GM10248 (cell line): ENCODE measurements at regions of chr7 and their contacts with region 1.

Region 1: DNA sequence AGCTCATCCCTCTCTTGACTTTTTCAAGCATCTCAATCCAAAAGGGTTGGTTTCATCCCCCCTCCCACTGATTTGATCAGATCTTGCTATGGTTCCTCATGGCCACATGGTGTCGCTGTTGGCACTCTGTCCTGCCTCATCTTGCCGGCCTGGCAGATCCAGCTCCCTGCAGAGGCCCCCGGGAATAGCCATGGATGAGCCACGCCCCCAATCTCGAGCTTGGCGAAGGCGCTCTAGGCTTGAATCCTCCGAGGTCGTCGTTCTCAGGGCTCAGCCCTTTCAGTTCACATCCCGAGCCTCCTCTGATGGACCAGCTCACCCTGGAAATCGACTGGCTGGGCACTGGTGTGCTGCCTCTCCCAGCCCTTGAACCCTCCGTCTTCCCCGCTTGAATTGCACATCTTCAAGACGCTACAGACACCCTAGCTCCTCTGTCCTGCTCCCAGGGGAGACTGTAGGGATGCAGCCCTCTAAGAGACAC is 628.7 kb downstream of the TYW1 start:
- DNase-seq: peak; percentile 43
- CTCF ChIP-seq: peak; percentile 72

Region 2: DNA sequence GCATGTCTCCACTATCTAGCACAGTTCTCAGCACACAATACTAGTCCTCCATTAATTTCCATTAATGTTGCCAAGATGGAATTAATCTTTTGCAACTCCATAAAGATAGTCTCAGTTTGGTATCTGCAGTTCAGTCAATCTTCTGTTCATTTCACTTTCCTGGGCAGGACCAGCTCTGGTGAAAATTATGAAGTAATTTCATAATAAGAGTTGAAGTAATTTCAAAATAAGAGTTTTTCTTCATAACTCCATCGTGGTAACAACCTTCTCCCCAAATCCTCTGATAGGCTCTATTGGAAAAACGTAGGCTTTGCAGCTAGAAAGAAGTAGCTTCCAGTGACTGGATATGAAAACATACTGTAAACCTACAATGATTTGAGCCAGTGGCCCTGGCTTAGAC is 10.5 kb before region 1 on chr7:
- CTCF ChIA-PET with region 1: interaction called, 22 read pairs
- POLR2A ChIA-PET with region 1: no interaction called
- DNase-seq: no peak
- CTCF ChIP-seq: no peak

Region 3: DNA sequence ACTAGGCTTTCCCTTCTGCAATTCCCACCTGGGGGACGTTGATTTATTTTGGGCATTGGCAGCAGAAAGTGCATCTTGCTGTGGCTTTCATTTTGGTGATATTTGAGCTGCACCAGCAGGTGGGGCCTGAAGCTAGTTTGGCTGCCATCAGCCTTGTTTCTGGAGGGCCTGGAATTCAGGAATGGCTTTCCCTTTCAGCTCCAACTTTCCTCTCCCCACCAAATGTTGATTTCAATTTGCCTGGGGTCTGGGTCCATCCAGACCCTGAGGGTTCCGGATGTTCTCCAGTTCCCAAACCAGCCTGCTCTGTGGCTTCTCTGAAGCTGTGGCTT is 11.7 kb after region 1 on chr7:
- CTCF ChIA-PET with region 1: interaction called, 12 read pairs
- POLR2A ChIA-PET with region 1: no interaction called
- DNase-seq: no peak
- CTCF ChIP-seq: no peak